Ovary (tissue), 10 donors: ENCODE measurements at regions of chr17 and their contacts with region 1.

Region 1: DNA sequence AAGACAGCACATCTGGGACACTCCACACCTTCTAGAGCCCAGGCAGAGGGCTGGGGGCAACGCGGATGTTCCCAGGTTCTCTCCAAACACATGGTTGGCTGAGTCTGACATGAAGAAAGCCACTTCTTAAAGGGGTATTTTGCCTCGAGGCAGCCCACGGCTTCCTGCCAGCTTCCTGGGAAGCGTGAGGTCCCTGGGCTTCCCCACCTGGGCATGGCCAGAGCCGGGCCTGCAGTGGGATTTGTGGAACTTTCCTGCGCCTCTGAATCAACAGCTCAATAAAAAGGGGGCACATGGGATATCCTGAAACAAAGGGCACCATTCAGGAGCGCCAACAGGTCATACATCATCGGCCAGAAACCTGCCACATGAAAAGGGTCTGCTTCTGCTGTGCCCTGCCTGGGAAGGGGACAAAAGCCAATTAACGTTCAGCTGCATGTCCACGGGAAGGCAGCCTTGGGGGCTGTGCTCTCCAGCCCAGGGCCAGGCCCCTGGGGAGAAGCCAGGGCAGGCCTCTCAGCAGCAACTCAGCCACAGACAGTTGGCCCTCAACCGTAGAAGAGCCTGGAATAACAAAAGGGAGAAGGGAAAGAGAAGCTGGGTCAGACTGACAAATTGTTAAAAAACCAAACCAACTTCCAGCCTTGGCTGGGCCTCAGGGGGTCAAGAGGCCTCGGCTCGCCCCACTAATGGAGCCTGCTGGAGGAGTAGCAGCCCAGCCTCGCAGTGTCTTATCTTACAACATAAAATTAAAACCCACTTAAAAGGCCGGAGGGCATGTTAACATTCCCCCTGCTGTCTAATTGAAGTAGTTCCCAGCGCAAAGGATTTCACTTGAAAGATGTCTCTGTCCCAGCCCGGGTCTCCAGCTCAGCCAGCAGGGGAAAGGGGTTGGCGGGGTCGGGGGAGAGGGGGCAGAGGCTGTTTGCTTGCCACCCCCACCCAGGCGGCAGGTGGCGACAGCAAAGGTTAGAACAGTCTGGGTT is 34.2 kb downstream of the TBX4 start:
- DNase-seq: no peak
- H3K4me3 ChIP-seq: no peak overlapping the region
- H3K27ac ChIP-seq: no peak overlapping the region
- H3K4me1 ChIP-seq: peaks cover 2% of the 10 kb centered on the region
- H3K27me3 ChIP-seq: no peaks in the 10 kb centered on the region
- CTCF ChIP-seq: no peak
- EP300 ChIP-seq: no peak
- POLR2A ChIP-seq: no peak

Region 2: DNA sequence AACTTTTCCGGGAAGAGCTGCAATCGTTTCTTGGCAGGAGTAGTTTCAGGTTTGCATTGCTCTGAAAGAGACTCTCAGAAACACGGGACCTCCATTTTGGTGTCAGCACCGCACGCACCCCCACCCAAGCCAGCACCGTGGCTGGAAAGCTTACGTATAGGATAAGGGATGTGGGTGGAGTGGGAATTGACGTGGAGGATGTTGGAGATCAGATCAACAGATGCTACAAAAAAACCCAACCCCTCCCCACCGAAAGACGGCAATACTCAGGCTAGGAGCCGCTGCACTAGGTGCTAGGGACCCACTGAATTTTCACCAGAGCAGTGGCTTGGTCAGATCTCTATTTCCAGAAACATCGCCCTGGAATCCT is 1351.7 kb before region 1 on chr17:
- intact Hi-C with region 1: loop called in 1 of 4 experiments (anchors 5 kb)
- DNase-seq: no peak
- H3K4me3 ChIP-seq: peak overlapping the region; percentile 49
- H3K27ac ChIP-seq: peak overlapping the region in 1 of 2 donors; percentile 41
- H3K4me1 ChIP-seq: peaks cover 11% of the 10 kb centered on the region
- H3K27me3 ChIP-seq: no peaks in the 10 kb centered on the region
- CTCF ChIP-seq: no peak
- EP300 ChIP-seq: no peak
- POLR2A ChIP-seq: no peak